ENCODE measurements at regions of chr2 and their contacts with region 1.

Region 1: DNA sequence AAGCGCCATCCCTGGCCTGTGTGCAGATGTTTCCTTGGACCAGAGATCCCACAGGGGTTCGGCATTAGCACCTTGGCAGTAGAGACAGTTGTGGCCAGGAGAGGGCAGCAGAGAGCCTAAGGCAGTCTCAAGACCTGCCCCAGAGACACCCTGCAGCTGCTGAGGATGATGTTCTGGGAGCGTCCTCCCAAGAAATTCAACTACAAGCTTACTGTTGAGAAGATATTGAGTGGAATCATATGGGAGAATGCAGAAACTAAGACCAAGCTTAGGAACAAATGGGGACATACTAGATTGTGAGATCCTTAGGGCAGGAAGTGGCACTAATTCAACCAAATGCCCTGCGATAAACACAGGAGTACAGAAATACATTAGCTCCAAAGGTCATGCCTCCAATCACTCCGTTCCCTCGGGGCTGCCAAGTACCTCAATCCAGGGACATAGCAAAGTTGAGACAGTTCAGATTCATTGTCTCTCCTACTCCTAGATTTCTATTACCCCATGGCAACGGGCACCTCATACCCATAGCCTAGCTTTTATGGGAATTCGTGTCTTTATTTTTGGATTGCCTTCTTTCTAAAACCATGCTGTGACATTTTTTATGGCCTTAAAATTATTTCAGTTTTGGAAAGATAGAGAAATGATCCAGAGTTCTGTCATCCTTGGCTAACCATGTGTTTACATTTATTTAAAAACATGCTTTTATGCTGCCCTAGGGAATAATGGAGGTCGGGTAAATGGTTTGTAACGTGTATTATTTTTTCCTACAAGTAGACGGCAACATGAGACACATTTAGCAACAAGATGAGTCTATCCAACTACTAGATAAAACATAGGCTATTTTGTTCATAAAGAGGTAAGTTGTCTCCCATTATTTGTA is 2.2 kb upstream of the ERMN start:
- DNase-seq: peak; percentile 62 to 73 (median 72)
- H3K4me3 ChIP-seq: no peak overlapping the region
- H3K4me3 Mint-ChIP-seq: no peak overlapping the region
- H3K27ac ChIP-seq: no peak overlapping the region
- H3K27ac Mint-ChIP-seq: peak overlapping the region in 1 of 7 donors; percentile 17
- H3K4me1 ChIP-seq: no peaks in the 10 kb centered on the region
- H3K4me1 Mint-ChIP-seq: peaks cover 4% of the 10 kb centered on the region
- H3K27me3 ChIP-seq: no peaks in the 10 kb centered on the region
- H3K27me3 Mint-ChIP-seq: peaks cover 2 to 3% (median 2%) of the 10 kb centered on the region in 3 donors
- CTCF ChIP-seq: peak; percentile 95

Region 2: GRCh38 chr2:157438863-157439823 is 111.3 kb after region 1 on chr2:
- intact Hi-C with region 1: loop called in 1 of 2 experiments (anchors 10 kb)
- DNase-seq: peak in 1 of 3 donors; percentile 39
- H3K4me3 ChIP-seq: peak overlapping the region; percentile 12 to 100 (median 100)
- H3K4me3 Mint-ChIP-seq: peak overlapping the region; percentile 100
- H3K27ac ChIP-seq: peak overlapping the region in 1 of 2 donors; percentile 93
- H3K27ac Mint-ChIP-seq: peak overlapping the region; percentile 85 to 99 (median 97)
- H3K4me1 ChIP-seq: peaks cover 42 to 84% of the 10 kb centered on the region in 2 donors
- H3K4me1 Mint-ChIP-seq: peaks cover 73% of the 10 kb centered on the region
- H3K27me3 ChIP-seq: no peaks in the 10 kb centered on the region
- H3K27me3 Mint-ChIP-seq: no peaks in the 10 kb centered on the region
- CTCF ChIP-seq: no peak

Region 3: GRCh38 chr2:157459486-157459885 is 131.6 kb after region 1 on chr2:
- intact Hi-C with region 1: no loop called
- DNase-seq: no peak
- H3K4me3 ChIP-seq: no peak overlapping the region
- H3K4me3 Mint-ChIP-seq: no peak overlapping the region
- H3K27ac ChIP-seq: no peak overlapping the region
- H3K27ac Mint-ChIP-seq: no peak overlapping the region
- H3K4me1 ChIP-seq: peaks cover 18 to 25% of the 10 kb centered on the region in 2 donors
- H3K4me1 Mint-ChIP-seq: peaks cover 21% of the 10 kb centered on the region
- H3K27me3 ChIP-seq: no peaks in the 10 kb centered on the region
- H3K27me3 Mint-ChIP-seq: no peaks in the 10 kb centered on the region
- CTCF ChIP-seq: no peak

Region 4: GRCh38 chr2:157492189-157492773 is 164.4 kb after region 1 on chr2:
- intact Hi-C with region 1: loop called in 1 of 2 experiments (anchors 10 kb)
- DNase-seq: peak; percentile 51 to 78 (median 65)
- H3K4me3 ChIP-seq: no peak overlapping the region
- H3K4me3 Mint-ChIP-seq: no peak overlapping the region
- H3K27ac ChIP-seq: no peak overlapping the region
- H3K27ac Mint-ChIP-seq: peak overlapping the region in 1 of 7 donors; percentile 27
- H3K4me1 ChIP-seq: peaks cover 8 to 10% of the 10 kb centered on the region in 2 donors
- H3K4me1 Mint-ChIP-seq: peaks cover 10% of the 10 kb centered on the region
- H3K27me3 ChIP-seq: no peaks in the 10 kb centered on the region
- H3K27me3 Mint-ChIP-seq: no peaks in the 10 kb centered on the region
- CTCF ChIP-seq: peak; percentile 86